ENCODE measurements at regions of chr9 and their contacts with region 1.

Region 1: DNA sequence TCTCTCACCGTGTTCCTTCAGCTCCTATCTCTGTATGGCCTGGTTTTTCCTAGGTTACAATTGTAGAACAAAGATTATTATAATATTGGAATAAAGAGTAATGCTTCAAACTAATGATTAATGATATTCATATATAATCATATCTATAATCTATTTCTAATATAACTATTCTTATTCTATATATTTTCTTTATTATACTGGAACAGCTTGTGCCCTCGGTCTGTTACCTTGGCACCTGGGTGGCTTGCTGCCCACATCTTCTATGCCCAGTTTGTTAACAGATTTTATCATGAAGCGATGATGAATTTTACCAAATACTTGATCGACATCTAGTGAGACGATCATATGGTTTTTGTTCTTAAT is 363.6 kb upstream of the TYRP1 start:
- DNase-seq: no peak
- H3K4me3 ChIP-seq: no peak overlapping the region
- H3K27ac ChIP-seq: no peak overlapping the region
- H3K4me1 ChIP-seq: no peaks in the 10 kb centered on the region
- H3K27me3 ChIP-seq: no peaks in the 10 kb centered on the region
- CTCF ChIP-seq: no peak
- EP300 ChIP-seq: no peak
- POLR2A ChIP-seq: no peak

Region 2: GRCh38 chr9:10366171-10366779 is 1963.3 kb before region 1 on chr9:
- in situ Hi-C with region 1: loop called in 1 of 4 experiments (anchors 25 kb)
- intact Hi-C with region 1: no loop called
- DNase-seq: no peak
- H3K4me3 ChIP-seq: no peak overlapping the region
- H3K27ac ChIP-seq: no peak overlapping the region
- H3K4me1 ChIP-seq: no peaks in the 10 kb centered on the region
- H3K27me3 ChIP-seq: no peaks in the 10 kb centered on the region
- CTCF ChIP-seq: peak; percentile 34 to 45 (median 41)
- EP300 ChIP-seq: no peak
- POLR2A ChIP-seq: no peak

Region 3: DNA sequence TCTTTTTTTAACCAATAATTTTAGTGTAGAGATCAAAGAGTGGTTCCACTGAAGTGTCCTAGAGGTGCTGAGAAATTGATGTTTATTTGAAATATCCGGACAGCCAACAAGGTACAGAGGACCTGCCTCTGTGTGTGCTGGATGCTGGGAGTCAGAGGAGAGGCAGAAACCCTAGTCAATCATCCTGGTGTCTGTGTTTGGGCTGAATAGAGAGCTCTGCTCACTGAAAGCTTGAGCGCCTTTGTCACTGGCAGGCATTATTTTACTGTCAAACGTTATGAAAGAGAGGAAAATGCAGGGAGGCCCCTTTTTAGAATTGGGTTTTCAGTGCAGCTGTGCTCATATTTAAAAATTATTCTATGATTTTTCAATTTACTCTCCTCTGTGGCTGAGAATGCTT is 116.7 kb before region 1 on chr9:
- in situ Hi-C with region 1: no loop called
- intact Hi-C with region 1: no loop called
- DNase-seq: no peak
- H3K4me3 ChIP-seq: no peak overlapping the region
- H3K27ac ChIP-seq: no peak overlapping the region
- H3K4me1 ChIP-seq: no peaks in the 10 kb centered on the region
- H3K27me3 ChIP-seq: no peaks in the 10 kb centered on the region
- CTCF ChIP-seq: no peak
- EP300 ChIP-seq: no peak
- POLR2A ChIP-seq: no peak

Region 4: DNA sequence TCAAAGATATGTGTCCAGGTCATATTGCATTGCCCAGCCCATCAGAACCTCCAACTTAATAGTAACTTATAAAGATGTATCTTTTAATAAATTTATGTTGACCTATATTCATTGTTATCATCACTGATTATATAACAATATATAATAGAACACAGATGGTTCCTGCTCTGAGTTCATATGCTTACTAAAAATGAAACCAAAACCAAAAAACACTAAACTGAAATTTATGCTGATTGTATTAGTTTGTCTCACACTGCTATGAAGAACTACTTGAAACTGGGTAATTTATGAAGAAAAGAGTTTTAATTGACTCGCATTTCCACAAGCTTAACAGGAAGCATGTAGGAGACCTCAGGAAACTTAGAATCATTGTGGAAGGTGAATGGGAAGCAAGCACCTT is 98.9 kb before region 1 on chr9:
- in situ Hi-C with region 1: loop called in 1 of 4 experiments (anchors 25 kb)
- intact Hi-C with region 1: no loop called
- DNase-seq: no peak
- H3K4me3 ChIP-seq: no peak overlapping the region
- H3K27ac ChIP-seq: no peak overlapping the region
- H3K4me1 ChIP-seq: no peaks in the 10 kb centered on the region
- H3K27me3 ChIP-seq: no peaks in the 10 kb centered on the region
- CTCF ChIP-seq: no peak
- EP300 ChIP-seq: no peak
- POLR2A ChIP-seq: no peak

Region 5: GRCh38 chr9:12448246-12448645 is 118.6 kb after region 1 on chr9:
- in situ Hi-C with region 1: no loop called
- intact Hi-C with region 1: no loop called
- DNase-seq: no peak
- H3K4me3 ChIP-seq: no peak overlapping the region
- H3K27ac ChIP-seq: no peak overlapping the region
- H3K4me1 ChIP-seq: no peaks in the 10 kb centered on the region
- H3K27me3 ChIP-seq: no peaks in the 10 kb centered on the region
- CTCF ChIP-seq: no peak
- EP300 ChIP-seq: no peak
- POLR2A ChIP-seq: no peak

Region 6: GRCh38 chr9:12658531-12659209 is 329.1 kb after region 1 on chr9:
- in situ Hi-C with region 1: no loop called
- intact Hi-C with region 1: no loop called
- DNase-seq: no peak
- H3K4me3 ChIP-seq: no peak overlapping the region
- H3K27ac ChIP-seq: no peak overlapping the region
- H3K4me1 ChIP-seq: no peaks in the 10 kb centered on the region
- H3K27me3 ChIP-seq: no peaks in the 10 kb centered on the region
- CTCF ChIP-seq: no peak
- EP300 ChIP-seq: no peak
- POLR2A ChIP-seq: no peak

Measured in transverse colon (tissue), 4 donors.